Activated naive CD4-positive, alpha-beta T cell treated with anti-CD3 and anti-CD28 coated beads for 36 hours (primary cell): ENCODE measurements at regions of chr9 and their contacts with region 1.

Region 1: DNA sequence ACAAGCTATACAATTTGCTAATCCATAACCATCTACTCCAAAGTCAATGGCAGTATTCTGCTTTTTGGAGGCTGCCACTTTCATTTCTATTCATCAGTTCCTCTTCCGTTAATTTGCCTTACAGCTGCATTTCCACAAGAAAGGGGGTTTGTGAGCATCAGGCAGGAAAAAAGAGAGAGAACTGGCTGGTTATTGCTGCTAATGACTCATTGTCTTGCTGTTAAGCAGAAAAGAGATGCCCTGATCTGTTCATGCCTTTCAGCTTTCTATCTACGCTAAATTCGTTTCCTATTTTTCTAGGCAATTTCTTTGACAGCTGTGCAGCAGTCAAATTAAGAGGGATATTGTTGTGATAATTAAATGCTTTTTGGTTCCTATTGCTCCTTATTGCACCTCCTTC is 65.9 kb upstream of the GNAQ start:
- DNase-seq: no peak
- H3K4me3 Mint-ChIP-seq: no peak overlapping the region
- H3K27ac Mint-ChIP-seq: no peak overlapping the region
- H3K4me1 Mint-ChIP-seq: peaks cover 8% of the 10 kb centered on the region
- H3K27me3 Mint-ChIP-seq: no peaks in the 10 kb centered on the region

Region 2: DNA sequence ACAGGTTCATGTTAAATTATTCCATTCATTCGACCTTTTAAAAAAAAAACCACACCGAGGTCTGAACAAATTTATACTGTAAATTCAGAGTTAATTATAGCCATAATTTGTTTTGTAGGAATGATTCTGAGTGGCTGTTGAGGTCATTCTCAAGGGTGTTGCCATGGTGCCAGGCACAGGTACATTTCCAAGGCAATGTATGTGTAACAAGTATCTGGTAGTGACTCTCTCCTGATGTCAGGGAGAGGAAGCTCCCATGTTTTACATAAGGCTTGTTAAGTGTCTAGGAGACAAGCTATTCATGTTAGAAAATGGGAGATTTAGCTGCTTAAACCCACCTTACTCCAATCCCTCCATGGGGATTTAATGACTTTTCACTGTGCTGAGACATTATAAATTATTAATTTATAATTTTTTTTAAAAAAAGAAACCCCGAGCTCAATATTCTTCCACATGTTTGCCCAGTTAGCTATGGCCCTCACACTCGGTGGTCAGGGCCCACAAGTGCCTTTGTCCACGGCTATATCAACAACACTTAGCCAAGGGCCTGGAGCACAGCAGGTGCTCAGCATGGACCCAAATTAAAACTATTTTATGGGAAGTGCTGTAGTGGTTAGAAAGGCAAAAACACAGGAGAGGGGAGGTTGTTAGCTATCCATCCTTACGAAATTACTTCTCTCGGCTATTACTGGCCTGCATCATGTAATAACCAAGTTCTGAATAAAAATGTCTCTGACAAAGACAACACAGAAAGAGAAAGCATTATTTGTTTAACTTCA is 294.8 kb before region 1 on chr9:
- CTCF ChIA-PET with region 1: no interaction called
- intact Hi-C with region 1: no loop called
- DNase-seq: no peak
- H3K4me3 Mint-ChIP-seq: no peak overlapping the region
- H3K27ac Mint-ChIP-seq: no peak overlapping the region
- H3K4me1 Mint-ChIP-seq: peaks cover 10% of the 10 kb centered on the region
- H3K27me3 Mint-ChIP-seq: no peaks in the 10 kb centered on the region

Region 3: GRCh38 chr9:78053627-78054026 is 43.9 kb before region 1 on chr9:
- CTCF ChIA-PET with region 1: no interaction called
- intact Hi-C with region 1: no loop called
- DNase-seq: no peak
- H3K4me3 Mint-ChIP-seq: no peak overlapping the region
- H3K27ac Mint-ChIP-seq: no peak overlapping the region
- H3K4me1 Mint-ChIP-seq: peaks cover 18% of the 10 kb centered on the region
- H3K27me3 Mint-ChIP-seq: no peaks in the 10 kb centered on the region

Region 4: DNA sequence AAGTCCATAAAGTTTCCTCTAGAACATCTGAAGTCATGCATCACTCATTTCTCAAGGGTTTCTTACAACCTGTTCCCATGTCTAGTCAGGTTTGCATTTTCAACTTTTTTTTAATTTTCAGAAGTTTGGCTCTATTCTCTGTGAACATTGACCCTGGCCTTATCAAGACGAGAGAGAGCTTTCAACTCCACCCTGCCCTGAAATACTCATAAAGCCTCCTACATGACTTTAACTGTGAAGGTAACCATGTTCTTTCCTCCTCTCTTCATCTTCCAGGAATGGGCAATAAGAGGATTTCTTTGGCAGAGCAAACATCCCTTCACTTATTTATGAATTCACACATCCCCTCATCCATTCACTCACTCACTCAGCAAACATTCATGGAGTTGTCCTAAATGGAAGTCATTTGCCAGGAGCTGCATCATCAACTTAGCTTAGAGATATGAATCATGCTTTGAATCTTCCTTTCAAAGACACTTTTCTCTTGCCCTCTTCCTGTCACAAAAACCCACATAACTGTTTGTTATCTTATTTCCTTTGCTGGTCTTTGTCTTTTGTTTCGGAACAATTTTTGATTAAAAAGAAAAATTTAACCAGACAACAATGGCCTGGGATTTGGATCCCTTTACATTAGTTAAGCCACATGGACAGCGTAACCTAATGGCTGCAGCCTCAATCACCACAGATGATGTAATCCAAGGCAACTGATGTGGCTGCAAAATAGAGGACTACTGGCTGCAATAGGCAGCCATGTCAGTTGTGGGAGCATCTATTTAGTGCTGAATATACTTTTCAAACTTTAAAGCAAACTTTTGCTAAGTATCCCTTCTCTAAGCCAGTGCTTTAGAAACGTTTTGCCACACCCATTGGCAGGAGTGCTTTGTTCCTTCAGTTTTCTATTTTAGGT is 22.9 kb before region 1 on chr9:
- CTCF ChIA-PET with region 1: no interaction called
- intact Hi-C with region 1: loop called (anchors 2 kb)
- DNase-seq: peak; percentile 54
- H3K4me3 Mint-ChIP-seq: no peak overlapping the region
- H3K27ac Mint-ChIP-seq: peak overlapping the region; percentile 81
- H3K4me1 Mint-ChIP-seq: peaks cover 43% of the 10 kb centered on the region
- H3K27me3 Mint-ChIP-seq: no peaks in the 10 kb centered on the region

Region 5: DNA sequence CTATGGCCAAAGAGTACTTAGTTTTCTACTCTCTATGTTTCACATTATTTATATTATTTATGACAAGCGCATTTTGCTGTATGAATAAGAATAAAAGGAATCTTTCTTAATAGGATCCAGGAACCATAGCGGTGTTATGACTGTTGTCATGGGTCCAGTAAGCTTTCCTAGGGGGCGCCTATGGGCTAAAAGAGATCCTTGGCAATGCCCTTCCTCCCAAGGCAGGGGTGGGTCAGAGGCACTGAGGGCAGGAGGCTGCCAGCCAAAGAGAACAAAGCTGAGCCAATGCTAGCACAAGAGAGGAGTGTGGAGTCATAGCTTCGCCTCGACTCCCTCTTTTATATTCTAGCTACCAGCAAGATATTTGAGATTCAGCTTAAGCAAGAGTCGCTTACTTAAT is 32.5 kb after region 1 on chr9:
- CTCF ChIA-PET with region 1: no interaction called
- intact Hi-C with region 1: no loop called
- DNase-seq: no peak
- H3K4me3 Mint-ChIP-seq: no peak overlapping the region
- H3K27ac Mint-ChIP-seq: no peak overlapping the region
- H3K4me1 Mint-ChIP-seq: peaks cover 16% of the 10 kb centered on the region
- H3K27me3 Mint-ChIP-seq: no peaks in the 10 kb centered on the region